ENCODE measurements at regions of chr15 and their contacts with region 1.

Region 1: GRCh38 chr15:57527382-57528091 is 64.2 kb upstream of the MYZAP start:
- DNase-seq: no peak
- H3K4me3 ChIP-seq: no peak overlapping the region
- H3K27me3 ChIP-seq: no peaks in the 10 kb centered on the region
- CTCF ChIP-seq: peak; percentile 51

Region 2: DNA sequence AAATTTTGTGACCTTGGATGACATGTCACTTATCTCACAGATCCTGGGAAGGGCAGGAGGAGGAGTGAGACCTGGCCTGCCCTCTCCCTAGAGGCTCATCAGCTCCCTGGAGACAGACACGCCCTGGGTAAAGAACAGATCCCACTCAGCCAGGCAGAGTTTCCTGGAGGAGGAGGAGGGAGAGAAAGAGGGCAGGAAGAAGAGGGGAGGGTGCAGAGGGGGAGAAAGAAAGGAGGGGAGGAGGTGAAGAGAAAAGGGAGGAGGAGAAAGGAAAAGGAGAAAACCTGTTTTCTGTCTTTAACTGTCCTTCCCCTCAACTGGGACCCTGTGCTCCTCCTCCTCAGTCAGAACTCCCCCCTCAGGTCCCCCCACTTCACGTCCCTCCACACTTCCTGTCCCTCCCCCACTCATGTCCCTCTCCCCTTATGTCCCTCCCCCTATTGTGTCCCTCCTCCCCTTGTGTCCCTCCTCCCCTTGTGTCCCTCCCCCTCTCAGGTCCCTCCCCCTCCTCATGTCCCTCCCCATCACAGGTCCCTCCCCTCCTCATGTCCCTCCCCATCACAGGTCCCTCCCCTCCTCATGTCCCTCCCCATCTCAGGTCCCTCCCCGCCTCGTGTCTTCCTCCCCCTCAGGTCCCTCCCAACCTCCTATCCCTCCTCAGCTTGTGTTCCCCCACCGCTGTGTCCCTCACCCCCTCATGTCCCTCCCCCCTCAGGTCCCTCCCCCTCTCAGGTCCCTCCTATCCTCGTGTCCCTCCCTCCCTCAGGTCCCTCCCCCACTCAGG is 203.5 kb before region 1 on chr15:
- CTCF ChIA-PET with region 1: interaction called, 11 read pairs
- POLR2A ChIA-PET with region 1: no interaction called
- DNase-seq: peak; percentile 34
- H3K4me3 ChIP-seq: no peak overlapping the region
- H3K27me3 ChIP-seq: no peaks in the 10 kb centered on the region
- CTCF ChIP-seq: no peak

Region 3: GRCh38 chr15:57334257-57334656 is 193.3 kb before region 1 on chr15:
- CTCF ChIA-PET with region 1: interaction called, 336 read pairs
- POLR2A ChIA-PET with region 1: no interaction called
- DNase-seq: no peak
- H3K4me3 ChIP-seq: no peak overlapping the region
- H3K27me3 ChIP-seq: no peaks in the 10 kb centered on the region
- CTCF ChIP-seq: no peak

Region 4: GRCh38 chr15:57485869-57486268 is 41.7 kb before region 1 on chr15:
- CTCF ChIA-PET with region 1: no interaction called
- POLR2A ChIA-PET with region 1: interaction called, 15 read pairs
- DNase-seq: peak; percentile 26
- H3K4me3 ChIP-seq: no peak overlapping the region
- H3K27me3 ChIP-seq: no peaks in the 10 kb centered on the region
- CTCF ChIP-seq: no peak

Region 5: DNA sequence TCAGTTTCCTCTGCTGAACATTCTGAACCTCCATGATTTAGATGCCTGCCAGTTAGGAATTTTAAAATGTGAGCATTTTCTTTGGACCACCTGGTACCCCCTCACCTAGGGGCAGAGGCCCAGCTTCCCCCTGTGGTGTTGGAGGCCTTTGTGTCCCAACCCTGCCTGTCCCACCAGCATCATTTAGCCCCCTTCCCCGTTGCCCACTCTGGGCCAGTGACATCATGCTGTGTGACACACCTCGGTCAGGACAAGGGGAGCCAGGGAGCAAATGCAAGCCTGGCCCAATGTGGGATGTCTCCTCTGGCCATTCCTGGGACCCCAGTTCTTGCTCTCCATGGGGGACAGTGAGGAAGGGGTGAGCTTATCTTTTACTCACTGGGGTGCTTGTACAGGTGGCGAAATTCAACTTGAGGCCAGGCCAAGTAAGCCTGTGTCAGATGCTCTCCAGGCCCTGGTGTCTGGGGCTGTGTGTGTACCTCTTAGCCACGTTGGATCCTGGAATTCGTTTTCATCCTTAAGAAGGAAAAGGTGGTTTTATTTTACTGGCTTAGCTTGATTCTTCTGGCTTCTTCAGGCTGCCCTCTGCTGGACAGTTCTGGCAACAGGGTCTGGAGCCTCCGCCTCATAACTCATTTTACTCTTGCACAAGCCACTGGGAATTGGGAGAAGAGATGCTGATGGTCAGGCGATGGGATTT is 14.4 kb after region 1 on chr15:
- CTCF ChIA-PET with region 1: interaction called, 43 read pairs
- POLR2A ChIA-PET with region 1: no interaction called
- DNase-seq: peak; percentile 18
- H3K4me3 ChIP-seq: no peak overlapping the region
- H3K27me3 ChIP-seq: no peaks in the 10 kb centered on the region; the same call in none of the 2 replicates
- CTCF ChIP-seq: peak; percentile 92

Region 6: GRCh38 chr15:57626713-57627440 is 99.3 kb after region 1 on chr15:
- CTCF ChIA-PET with region 1: no interaction called
- POLR2A ChIA-PET with region 1: no interaction called
- DNase-seq: no peak
- H3K4me3 ChIP-seq: no peak overlapping the region
- H3K27me3 ChIP-seq: no peaks in the 10 kb centered on the region
- CTCF ChIP-seq: no peak

Region 7: DNA sequence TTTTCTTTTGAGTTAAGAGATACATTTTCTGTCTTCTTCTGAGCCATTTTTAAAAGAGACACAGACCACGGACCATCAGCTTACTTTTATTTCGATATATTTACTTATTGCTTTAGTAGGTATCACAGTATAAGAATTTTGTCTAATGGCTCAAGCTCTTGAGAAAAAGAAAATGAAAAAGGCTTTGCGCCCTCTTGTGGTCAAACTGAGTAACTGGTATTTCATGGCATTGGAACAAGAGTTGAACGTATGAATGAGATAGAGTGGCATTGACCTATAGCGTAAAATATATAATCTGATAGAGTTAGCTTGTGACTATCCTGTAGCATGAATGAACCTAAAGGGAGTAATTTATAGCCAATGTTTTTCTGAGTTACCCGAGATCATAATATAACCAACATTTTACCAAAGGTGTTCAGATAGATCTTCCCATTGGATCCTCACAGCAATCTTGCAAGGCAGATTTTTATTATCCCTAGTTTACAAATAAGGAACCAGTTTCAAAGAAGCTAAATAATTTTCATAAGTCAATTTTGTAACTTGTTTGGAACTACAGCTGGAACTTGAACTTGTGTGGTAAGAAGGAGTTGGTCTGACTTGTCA is 333.6 kb after region 1 on chr15:
- CTCF ChIA-PET with region 1: no interaction called
- POLR2A ChIA-PET with region 1: no interaction called
- DNase-seq: no peak
- H3K4me3 ChIP-seq: no peak overlapping the region
- H3K27me3 ChIP-seq: no peaks in the 10 kb centered on the region
- CTCF ChIP-seq: peak; percentile 70

Region 8: DNA sequence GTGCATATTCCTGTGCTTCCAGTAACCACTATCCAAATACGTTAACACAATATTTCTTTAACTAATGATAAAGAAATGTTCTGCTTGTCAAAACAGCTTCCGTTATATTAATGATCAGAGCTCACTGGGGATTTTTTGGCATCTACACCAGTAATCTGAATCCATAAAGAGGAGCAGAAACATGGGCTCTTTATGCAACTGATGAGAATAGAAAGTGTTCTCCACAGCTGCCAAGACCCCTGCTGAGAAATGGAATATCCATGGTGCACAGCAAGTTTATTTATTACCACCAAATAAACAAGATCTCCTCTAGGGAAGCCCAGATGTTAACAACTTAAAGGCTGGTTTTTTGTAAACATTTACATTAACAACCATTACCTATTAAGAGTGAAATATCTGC is 483.4 kb after region 1 on chr15:
- CTCF ChIA-PET with region 1: no interaction called
- POLR2A ChIA-PET with region 1: no interaction called
- DNase-seq: no peak
- H3K4me3 ChIP-seq: no peak overlapping the region
- H3K27me3 ChIP-seq: no peaks in the 10 kb centered on the region
- CTCF ChIP-seq: no peak